Upper lobe of right lung (tissue), 1 donor: ENCODE measurements at regions of chr2 and their contacts with region 1.

Region 1: GRCh38 chr2:191691016-191691735 is 13.2 kb downstream of the NABP1 start:
- DNase-seq: no peak
- ATAC-seq: peak; percentile 89
- H3K4me3 ChIP-seq: no peak overlapping the region
- H3K27ac ChIP-seq: no peak overlapping the region
- H3K4me1 ChIP-seq: peaks cover 21% of the 10 kb centered on the region
- H3K27me3 ChIP-seq: no peaks in the 10 kb centered on the region
- CTCF ChIP-seq: peak; percentile 74

Region 2: GRCh38 chr2:191441496-191442214 is 249.5 kb before region 1 on chr2:
- intact Hi-C with region 1: no loop called
- DNase-seq: no peak
- ATAC-seq: peak; percentile 61
- H3K4me3 ChIP-seq: no peak overlapping the region
- H3K27ac ChIP-seq: no peak overlapping the region
- H3K4me1 ChIP-seq: peaks cover 3% of the 10 kb centered on the region
- H3K27me3 ChIP-seq: no peaks in the 10 kb centered on the region
- CTCF ChIP-seq: no peak

Region 3: DNA sequence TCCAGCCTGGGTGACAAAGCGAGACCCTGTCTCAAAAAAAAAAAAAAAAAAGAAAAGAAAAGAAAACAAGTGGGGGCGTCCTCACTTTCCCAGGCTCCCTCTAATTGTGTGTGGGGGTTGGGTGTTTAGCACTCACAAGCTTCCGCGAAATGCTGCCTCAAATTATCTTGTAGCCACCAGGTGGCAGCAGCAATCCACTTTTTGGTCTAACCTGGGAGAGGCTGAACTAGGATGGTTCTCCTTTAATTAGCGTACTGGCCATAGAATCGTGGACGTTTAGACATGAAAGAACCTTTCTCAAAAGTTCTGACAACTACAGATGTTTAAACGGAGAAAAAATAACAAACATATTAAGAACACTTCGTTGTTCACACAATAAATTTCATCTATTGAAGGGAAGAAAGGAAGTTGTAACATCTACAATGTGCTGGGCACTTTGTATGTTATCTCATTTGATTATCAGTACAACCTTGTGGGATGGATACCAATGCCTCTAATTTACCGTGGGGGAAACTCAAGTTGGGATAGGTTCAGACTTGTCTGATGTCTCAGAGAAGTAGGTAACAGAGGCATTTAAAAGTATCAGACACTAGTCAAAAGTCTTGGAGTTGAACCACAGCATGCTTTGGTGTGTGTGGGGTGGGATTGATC is 136.0 kb before region 1 on chr2:
- intact Hi-C with region 1: loop called (anchors 10 kb)
- DNase-seq: peak; percentile 77
- ATAC-seq: peak; percentile 97
- H3K4me3 ChIP-seq: no peak overlapping the region
- H3K27ac ChIP-seq: no peak overlapping the region
- H3K4me1 ChIP-seq: peaks cover 6% of the 10 kb centered on the region
- H3K27me3 ChIP-seq: no peaks in the 10 kb centered on the region
- CTCF ChIP-seq: peak; percentile 68